HEK293 (cell line): ENCODE measurements at regions of chr6 and their contacts with region 1.

Region 1: GRCh38 chr6:70310063-70310694 is 7.3 kb upstream of the COL9A1 start:
- H3K4me3 ChIP-seq: no peak overlapping the region
- H3K27ac ChIP-seq: no peak overlapping the region
- H3K4me1 ChIP-seq: peaks cover 6% of the 10 kb centered on the region; the same call in 1 of the 2 replicates
- CTCF ChIP-seq: no peak

Region 2: GRCh38 chr6:70151616-70152015 is 158.6 kb before region 1 on chr6:
- CTCF ChIA-PET with region 1: no interaction called
- POLR2A ChIA-PET with region 1: no interaction called
- H3K4me3 ChIP-seq: no peak overlapping the region
- H3K27ac ChIP-seq: no peak overlapping the region
- H3K4me1 ChIP-seq: peaks cover 18% of the 10 kb centered on the region; the same call in 1 of the 2 replicates
- CTCF ChIP-seq: no peak

Region 3: DNA sequence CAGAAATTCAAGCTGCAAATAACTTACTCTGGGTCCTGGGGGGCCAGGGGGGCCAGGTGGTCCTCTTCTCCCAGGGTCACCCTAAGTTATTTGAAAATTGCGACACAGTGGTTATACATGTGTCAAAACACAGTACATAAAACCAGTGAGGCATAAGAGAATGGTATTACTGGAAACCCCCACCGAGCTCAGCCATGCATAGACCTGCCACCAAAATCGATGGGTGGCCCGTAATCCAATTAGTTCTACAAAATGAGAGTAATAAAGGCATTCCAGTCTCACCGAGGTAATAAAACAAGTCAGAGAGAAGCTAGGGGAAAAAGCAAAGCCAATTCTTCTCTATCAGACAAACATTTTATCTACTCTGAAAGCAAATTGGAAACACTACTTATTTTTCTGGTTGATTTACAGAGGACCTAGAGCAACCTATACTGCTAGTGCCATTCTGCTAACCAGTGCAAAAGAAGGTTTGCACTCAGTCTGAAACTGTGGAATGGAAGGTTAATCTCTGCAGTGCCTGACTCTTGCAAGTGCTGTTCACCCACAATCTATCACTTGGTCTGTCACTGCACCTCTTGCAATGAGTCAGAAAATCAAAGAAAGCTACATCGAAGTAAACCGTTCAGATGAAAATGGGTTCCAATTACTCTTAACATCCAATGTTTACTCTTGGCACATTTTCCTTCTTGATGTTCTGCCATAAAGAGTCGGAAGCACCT is 39.7 kb before region 1 on chr6:
- CTCF ChIA-PET with region 1: interaction called, 14 read pairs
- POLR2A ChIA-PET with region 1: no interaction called
- H3K4me3 ChIP-seq: no peak overlapping the region
- H3K27ac ChIP-seq: no peak overlapping the region
- H3K4me1 ChIP-seq: peaks cover 4% of the 10 kb centered on the region; the same call in 1 of the 2 replicates
- CTCF ChIP-seq: no peak

Region 4: GRCh38 chr6:70327036-70327435 is 16.9 kb after region 1 on chr6:
- CTCF ChIA-PET with region 1: interaction called, 21 read pairs
- POLR2A ChIA-PET with region 1: no interaction called
- H3K4me3 ChIP-seq: no peak overlapping the region
- H3K27ac ChIP-seq: no peak overlapping the region
- H3K4me1 ChIP-seq: 0 out of 2 replicates have a peak, but pooled peaks cover 4% of the 10 kb centered on the region
- CTCF ChIP-seq: no peak

Region 5: GRCh38 chr6:70413114-70413991 is 103.2 kb after region 1 on chr6 and contains the start of gene FAM135A:
- CTCF ChIA-PET with region 1: interaction called, 24 read pairs
- POLR2A ChIA-PET with region 1: interaction called, 10 read pairs
- H3K4me3 ChIP-seq: peak within 1 kb of the TSS; percentile 75
- H3K27ac ChIP-seq: peak within 1 kb of the TSS; percentile 74; the same call in 1 of the 2 replicates
- H3K4me1 ChIP-seq: peaks cover 6% of the 10 kb centered on the region; the same call in 1 of the 2 replicates
- CTCF ChIP-seq: 0 out of 2 replicates have a peak, but pooled peaks have one; percentile 28

Region 6: GRCh38 chr6:70884074-70884983 is 574.1 kb after region 1 on chr6:
- CTCF ChIA-PET with region 1: interaction called, 33 read pairs
- POLR2A ChIA-PET with region 1: no interaction called
- H3K4me3 ChIP-seq: no peak overlapping the region
- H3K27ac ChIP-seq: no peak overlapping the region
- H3K4me1 ChIP-seq: no peaks in the 10 kb centered on the region
- CTCF ChIP-seq: peak; percentile 82